ENCODE measurements at regions of chr11 and their contacts with region 1.

Region 1: GRCh38 chr11:2196970-2197770 is 25.6 kb upstream of the TH start:
- DNase-seq: peak; percentile 81 to 84
- H3K4me3 ChIP-seq: no peak overlapping the region
- H3K27ac ChIP-seq: no peak overlapping the region
- H3K4me1 ChIP-seq: peaks cover 6% of the 10 kb centered on the region in 2 donors
- H3K27me3 ChIP-seq: no peaks in the 10 kb centered on the region
- CTCF ChIP-seq: peak; percentile 43 to 96 (median 91)
- POLR2A ChIP-seq: no peak

Region 2: DNA sequence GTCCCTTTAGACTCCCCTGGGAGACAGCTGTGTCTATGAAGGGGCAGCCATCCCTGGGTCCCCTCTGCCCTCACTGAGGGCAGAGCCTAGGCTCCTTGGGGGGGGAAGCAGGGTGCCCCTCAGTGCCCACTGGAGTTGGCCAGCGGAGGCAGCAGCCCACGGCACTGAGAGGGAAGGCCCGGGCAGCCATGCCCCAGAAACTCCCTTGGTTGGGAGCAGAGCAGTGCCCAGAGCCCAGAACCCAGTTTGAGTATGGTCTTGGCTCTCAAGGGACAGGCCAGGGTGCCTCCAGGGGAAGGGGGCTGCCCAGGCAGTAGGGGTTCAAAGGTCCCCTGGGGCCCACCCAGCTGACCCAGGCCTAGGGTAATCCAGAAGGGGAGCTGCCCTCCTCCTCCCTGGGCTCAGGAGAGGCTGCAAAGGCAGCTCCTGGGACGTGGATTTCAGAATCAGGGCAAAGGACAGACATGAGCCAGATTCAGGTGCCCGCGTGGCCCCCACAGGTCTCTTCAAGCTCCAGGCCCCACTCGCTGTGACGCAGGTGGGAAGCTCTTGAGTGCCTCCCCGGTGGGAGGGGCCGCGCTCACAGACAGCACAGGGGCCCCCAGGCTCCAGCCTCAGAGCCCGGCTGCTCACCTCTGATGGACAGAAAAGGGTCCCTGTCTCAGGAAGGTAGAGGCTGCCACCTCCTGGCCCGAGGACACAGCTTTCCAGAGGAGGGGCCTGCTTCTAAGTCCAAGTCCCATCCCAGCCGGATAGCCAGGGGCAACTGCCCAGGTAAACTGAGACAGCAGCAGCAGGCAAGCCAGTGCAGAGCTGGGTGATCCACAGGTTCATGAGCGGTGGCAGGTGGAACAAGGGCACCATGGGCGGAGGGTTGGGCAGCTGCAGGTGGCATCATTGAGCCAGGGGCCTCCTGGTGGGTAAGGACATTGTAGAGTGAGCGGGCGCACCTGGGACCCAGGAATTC is 101.9 kb after region 1 on chr11:
- intact Hi-C with region 1: loop called (anchors 2 kb)
- DNase-seq: peak; percentile 69 to 70
- H3K4me3 ChIP-seq: no peak overlapping the region
- H3K27ac ChIP-seq: no peak overlapping the region
- H3K4me1 ChIP-seq: peaks cover 7 to 12% of the 10 kb centered on the region in 2 donors
- H3K27me3 ChIP-seq: no peaks in the 10 kb centered on the region
- CTCF ChIP-seq: peak; percentile 15 to 86 (median 70)
- POLR2A ChIP-seq: no peak

Region 3: DNA sequence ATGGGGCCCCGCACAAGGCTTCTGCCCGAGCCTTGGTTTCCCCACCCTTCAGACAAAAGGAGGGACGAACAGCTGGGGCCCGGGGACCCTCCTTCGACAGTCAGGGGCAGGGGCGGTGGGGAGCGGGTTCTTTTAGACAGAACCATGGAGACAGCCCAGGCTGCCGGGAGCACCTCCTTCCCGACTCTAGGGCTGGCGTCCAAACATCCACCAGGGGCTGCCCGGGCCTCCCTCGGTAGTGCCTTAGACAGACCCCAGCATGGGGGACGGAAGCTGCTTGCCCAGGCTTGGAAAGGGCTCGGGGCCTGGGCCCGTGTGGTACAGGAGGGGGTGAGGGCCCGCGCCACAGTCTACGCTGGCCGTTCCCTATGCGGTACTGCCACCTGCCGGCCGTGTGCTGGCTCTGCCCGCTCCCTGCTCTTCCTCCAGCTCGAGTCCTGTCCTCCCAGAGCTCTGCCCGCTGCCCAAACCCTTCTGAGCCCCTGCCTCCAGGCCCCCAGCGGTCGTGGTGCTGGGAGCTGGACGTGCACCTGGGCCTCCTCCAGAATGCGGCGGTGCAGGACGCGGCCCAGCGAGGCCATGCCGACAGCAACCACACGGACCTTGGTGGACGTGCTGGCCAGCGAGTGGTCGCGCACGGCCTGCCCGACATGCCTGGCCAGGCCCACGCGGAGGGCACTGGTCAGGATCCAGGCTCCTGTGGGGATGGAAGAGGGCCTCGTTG is 223.5 kb after region 1 on chr11:
- intact Hi-C with region 1: loop called (anchors 2 kb)
- DNase-seq: peak; percentile 69 to 71
- H3K4me3 ChIP-seq: no peak overlapping the region
- H3K27ac ChIP-seq: no peak overlapping the region
- H3K4me1 ChIP-seq: peaks cover 0 to 13% of the 10 kb centered on the region in 2 donors
- H3K27me3 ChIP-seq: no peaks in the 10 kb centered on the region
- CTCF ChIP-seq: peak; percentile 71 to 95 (median 90)
- POLR2A ChIP-seq: no peak

Measured in thyroid gland (tissue), 4 donors.